ENCODE measurements at regions of chr1 and their contacts with region 1.

Region 1: GRCh38 chr1:204446370-204447111 is 34.9 kb upstream of the PPP1R15B start:
- DNase-seq: peak; percentile 62
- ATAC-seq: peak; percentile 96
- H3K4me3 ChIP-seq: no peak overlapping the region
- H3K27ac ChIP-seq: no peak overlapping the region
- H3K4me1 ChIP-seq: no peaks in the 10 kb centered on the region
- H3K27me3 ChIP-seq: no peaks in the 10 kb centered on the region
- CTCF ChIP-seq: peak; percentile 84
- POLR2A ChIP-seq: no peak
- RAD21 ChIP-seq: peak; percentile 83

Region 2: GRCh38 chr1:204408074-204408507 is 38.5 kb before region 1 on chr1:
- CTCF ChIA-PET with region 1: no interaction called
- POLR2A ChIA-PET with region 1: no interaction called
- dilution Hi-C with region 1: no loop called
- in situ Hi-C with region 1: no loop called
- intact Hi-C with region 1: loop called (anchors 1 kb)
- DNase-seq: peak; percentile 74
- ATAC-seq: no peak
- H3K4me3 ChIP-seq: peak overlapping the region; percentile 85
- H3K27ac ChIP-seq: no peak overlapping the region
- H3K4me1 ChIP-seq: no peaks in the 10 kb centered on the region
- H3K27me3 ChIP-seq: no peaks in the 10 kb centered on the region
- CTCF ChIP-seq: no peak
- POLR2A ChIP-seq: no peak
- RAD21 ChIP-seq: no peak

Measured in IMR-90 (cell line).